Right ventricle myocardium superior (tissue), 1 donor: ENCODE measurements at regions of chr2 and their contacts with region 1.

Region 1: DNA sequence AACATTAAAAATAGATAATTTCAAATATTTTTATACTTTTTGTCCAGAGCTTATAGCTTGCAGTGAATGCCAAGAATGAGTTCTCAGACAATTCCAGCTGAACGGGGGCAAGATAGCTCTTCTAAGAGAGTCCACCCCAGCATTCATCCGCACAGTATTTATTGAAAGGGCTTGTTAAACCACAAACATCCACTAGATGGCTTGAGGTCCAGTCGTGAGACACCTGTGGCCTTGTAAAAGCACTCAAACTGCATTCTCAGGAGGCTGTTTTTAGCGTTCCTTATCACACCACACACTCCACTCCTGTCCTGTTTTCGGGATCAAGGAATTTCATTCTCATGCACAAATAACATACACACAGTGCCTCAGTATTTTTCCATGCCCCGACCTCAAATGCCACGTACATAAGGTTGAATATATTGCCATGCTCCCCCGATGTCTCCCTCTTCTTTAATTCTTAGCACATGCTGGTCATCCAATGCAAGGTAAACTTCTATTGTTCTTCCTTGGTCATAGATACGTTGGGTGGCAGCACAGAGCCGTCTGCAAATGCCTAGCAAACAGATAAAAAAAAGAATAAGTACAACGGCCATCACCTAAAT is 47.4 kb downstream of the DNAJC10 start:
- DNase-seq: no peak
- ATAC-seq: peak; percentile 73

Region 2: GRCh38 chr2:182597570-182598295 is 165.7 kb before region 1 on chr2:
- intact Hi-C with region 1: no loop called
- DNase-seq: no peak
- ATAC-seq: no peak

Region 3: DNA sequence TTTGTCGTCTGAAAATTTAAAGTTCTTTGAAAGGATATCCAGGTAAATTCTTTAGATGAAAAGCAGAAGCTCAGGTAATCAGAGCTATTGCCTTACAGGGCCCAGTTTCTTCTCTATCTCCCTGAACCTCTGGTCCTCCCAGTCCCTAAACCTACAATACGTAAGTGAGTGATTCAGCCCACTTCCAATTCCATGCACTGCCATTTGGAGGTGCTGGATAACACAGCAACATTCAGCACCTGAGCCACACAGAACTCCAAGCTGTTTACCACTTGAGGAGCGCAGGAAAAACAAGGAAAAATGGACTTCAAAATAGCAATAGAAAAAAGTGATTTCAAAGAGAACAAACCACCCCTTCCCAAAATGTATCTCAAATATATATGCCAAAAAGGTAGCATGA is 152.4 kb before region 1 on chr2:
- intact Hi-C with region 1: no loop called
- DNase-seq: no peak
- ATAC-seq: no peak

Region 4: DNA sequence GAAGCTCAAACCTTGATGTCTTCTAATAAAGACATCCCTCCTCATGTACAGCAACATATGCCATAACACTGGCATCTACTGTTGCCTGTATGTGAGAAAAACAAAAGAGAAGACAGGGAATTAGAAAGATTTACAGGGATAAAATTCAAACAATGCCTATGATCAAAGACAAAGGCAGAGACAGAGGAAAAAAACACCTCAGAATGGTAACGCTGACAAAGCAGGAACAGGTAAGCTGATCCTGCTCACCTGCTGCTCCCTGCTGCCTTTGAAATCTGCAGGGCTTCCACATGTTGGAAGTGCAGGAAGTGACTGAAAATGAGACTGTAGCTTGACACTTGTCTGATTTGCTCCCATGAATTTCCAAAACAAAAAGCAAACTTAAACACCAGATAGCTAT is 137.6 kb before region 1 on chr2:
- intact Hi-C with region 1: no loop called
- DNase-seq: no peak
- ATAC-seq: no peak

Region 5: GRCh38 chr2:182915369-182916326 is 152.2 kb after region 1 on chr2:
- intact Hi-C with region 1: no loop called
- DNase-seq: no peak
- ATAC-seq: peak; percentile 79

Region 6: GRCh38 chr2:182980115-182980514 is 216.7 kb after region 1 on chr2:
- intact Hi-C with region 1: loop called (anchors 5 kb)
- DNase-seq: no peak
- ATAC-seq: peak; percentile 75